Activated T-helper 1 cell treated with anti-CD3 and anti-CD28 coated beads, Interleukin-12 subunit alpha, Interleukin-12 subunit beta, Interleukin-2, Interleukin-4 antibody, amounts not matched to agents 30 ng/mL and 10 ng/mL and 1 ng/mL, durations not matched to agents 14 hours and 24 hours and 36 hours (primary cell): ENCODE measurements at regions of chr9 and their contacts with region 1.

Region 1: DNA sequence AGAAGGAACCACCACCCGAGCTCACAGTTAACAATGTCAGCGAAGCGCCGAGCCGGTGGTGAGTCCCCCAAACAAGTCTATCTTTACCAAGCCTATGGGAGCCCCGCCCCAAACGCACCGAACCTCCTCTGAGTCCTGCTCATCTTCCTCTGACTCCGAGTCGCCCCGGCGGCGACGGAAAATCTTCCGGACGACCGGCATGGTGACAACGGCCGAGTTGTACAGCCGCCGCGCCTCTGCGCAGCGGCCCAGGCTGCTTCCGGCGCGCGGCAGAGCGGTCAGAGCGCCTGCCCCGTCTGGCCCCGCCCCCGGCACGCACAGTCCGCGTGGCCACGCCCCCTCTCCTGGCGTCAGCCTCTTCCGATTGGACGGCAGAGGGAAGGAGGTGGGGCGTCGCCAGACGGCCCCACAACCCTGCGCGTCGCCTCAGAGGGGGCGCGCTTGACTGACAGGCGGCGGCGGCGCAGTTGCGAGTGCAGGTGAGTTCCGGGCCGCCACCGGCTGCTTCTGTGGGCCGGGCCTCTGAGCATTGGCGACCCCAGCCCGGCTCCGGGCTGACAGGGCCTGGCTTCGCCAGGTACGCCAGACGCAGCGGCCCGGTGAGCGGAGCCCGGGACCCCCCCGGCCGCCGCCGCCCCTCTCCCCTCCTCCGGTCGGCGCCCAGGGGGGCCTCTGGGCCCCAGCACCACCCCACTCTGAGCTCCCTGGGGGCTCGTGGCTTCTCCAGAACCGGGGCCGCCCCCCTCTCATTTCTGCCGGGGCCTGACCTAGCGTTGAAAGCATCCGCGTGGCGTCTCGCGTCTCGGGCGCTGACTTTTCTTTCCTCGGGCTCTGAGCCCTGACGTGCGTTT is at the starts of genes C9orf78 and USP20:
- DNase-seq: peak; percentile 98
- H3K4me3 Mint-ChIP-seq: peak within 1 kb of the TSS; percentile 97
- H3K27ac Mint-ChIP-seq: peak within 1 kb of the TSS; percentile 99
- H3K4me1 Mint-ChIP-seq: peaks cover 50% of the 10 kb centered on the region
- H3K27me3 Mint-ChIP-seq: no peaks in the 10 kb centered on the region
- total RNA-seq, gene C9orf78: 64.0 and 67.4 TPM in 2 replicates
- total RNA-seq, gene USP20: 47.9 and 50.2 TPM in 2 replicates

Region 2: GRCh38 chr9:129641746-129642513 is 193.3 kb before region 1 on chr9 and contains the start of gene ASB6:
- intact Hi-C with region 1: loop called (anchors 1 kb)
- DNase-seq: peak; percentile 94
- H3K4me3 Mint-ChIP-seq: peak within 1 kb of the TSS; percentile 87
- H3K27ac Mint-ChIP-seq: peak within 1 kb of the TSS; percentile 90
- H3K4me1 Mint-ChIP-seq: peaks cover 10% of the 10 kb centered on the region
- H3K27me3 Mint-ChIP-seq: peaks cover 2% of the 10 kb centered on the region
- total RNA-seq, gene ASB6: 24.0 TPM in 2 replicates

Region 3: GRCh38 chr9:129726322-129727160 is 108.7 kb before region 1 on chr9:
- intact Hi-C with region 1: no loop called
- DNase-seq: peak; percentile 54
- H3K4me3 Mint-ChIP-seq: peak overlapping the region; percentile 56
- H3K27ac Mint-ChIP-seq: no peak overlapping the region
- H3K4me1 Mint-ChIP-seq: peaks cover 5% of the 10 kb centered on the region
- H3K27me3 Mint-ChIP-seq: peaks cover 16% of the 10 kb centered on the region

Region 4: DNA sequence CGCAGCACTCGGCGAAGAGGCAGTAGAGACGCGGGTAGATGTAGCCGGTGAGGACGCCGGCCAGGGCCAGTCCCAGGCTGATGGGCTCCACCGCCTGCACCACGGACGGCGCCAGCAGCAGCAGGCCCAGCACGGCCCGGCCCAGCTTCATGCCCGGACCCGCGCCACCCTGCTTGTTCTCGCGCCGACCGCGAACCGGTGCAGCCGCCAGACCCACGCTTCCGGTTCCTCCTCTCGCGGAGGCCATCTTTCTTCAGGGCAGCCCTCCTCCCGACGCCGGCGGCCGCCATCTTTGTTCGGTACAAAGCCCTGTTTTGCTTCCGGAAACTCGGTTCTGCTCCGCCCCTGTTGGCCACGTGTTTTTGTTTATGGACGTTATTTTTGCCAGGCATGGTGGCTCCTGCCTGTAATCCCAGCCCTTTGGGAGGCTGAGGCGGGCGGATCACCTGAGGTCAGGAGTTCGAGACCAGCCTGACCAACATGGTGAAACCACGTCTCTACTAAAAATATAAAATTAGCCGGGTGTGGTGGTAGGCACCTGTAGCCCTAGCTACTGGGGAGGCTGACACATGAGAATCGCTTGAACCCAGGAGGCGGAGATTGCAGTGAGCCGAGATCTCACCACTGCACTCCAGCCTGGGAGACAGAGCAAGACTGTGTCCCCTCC is 11.2 kb before region 1 on chr9 and contains the start of gene TOR1A:
- intact Hi-C with region 1: loop called (anchors 1 kb)
- DNase-seq: peak; percentile 89
- H3K4me3 Mint-ChIP-seq: peak within 1 kb of the TSS; percentile 91
- H3K27ac Mint-ChIP-seq: peak within 1 kb of the TSS; percentile 86
- H3K4me1 Mint-ChIP-seq: peaks cover 12% of the 10 kb centered on the region
- H3K27me3 Mint-ChIP-seq: no peaks in the 10 kb centered on the region
- total RNA-seq, gene TOR1A: 61.3 and 62.1 TPM in 2 replicates

Region 5: GRCh38 chr9:129962889-129963703 is 127.8 kb after region 1 on chr9:
- intact Hi-C with region 1: loop called (anchors 1 kb)
- DNase-seq: peak; percentile 70
- H3K4me3 Mint-ChIP-seq: peak overlapping the region; percentile 76
- H3K27ac Mint-ChIP-seq: peak overlapping the region; percentile 88
- H3K4me1 Mint-ChIP-seq: peaks cover 60% of the 10 kb centered on the region
- H3K27me3 Mint-ChIP-seq: no peaks in the 10 kb centered on the region

Region 6: GRCh38 chr9:130095872-130096271 is 260.6 kb after region 1 on chr9:
- intact Hi-C with region 1: loop called (anchors 5 kb)
- DNase-seq: no peak
- H3K4me3 Mint-ChIP-seq: no peak overlapping the region
- H3K27ac Mint-ChIP-seq: peak overlapping the region; percentile 57
- H3K4me1 Mint-ChIP-seq: peaks cover 16% of the 10 kb centered on the region
- H3K27me3 Mint-ChIP-seq: no peaks in the 10 kb centered on the region